Activated CD4-positive, alpha-beta memory T cell treated with anti-CD3 and anti-CD28 coated beads, Interleukin-2, amount 10 ng/mL, durations not matched to agents 7 days and 5 days (primary cell): ENCODE measurements at regions of chr13 and their contacts with region 1.

Region 1: GRCh38 chr13:36858290-36858689 is 39.3 kb downstream of the RFXAP start:
- DNase-seq: no peak
- H3K4me3 Mint-ChIP-seq: no peak overlapping the region
- H3K27ac Mint-ChIP-seq: no peak overlapping the region
- H3K4me1 Mint-ChIP-seq: peaks cover 13% of the 10 kb centered on the region
- H3K27me3 Mint-ChIP-seq: peaks cover 18% of the 10 kb centered on the region

Region 2: GRCh38 chr13:36766314-36766713 is 92.0 kb before region 1 on chr13:
- CTCF ChIA-PET with region 1: no interaction called
- POLR2A ChIA-PET with region 1: no interaction called
- DNase-seq: no peak
- H3K4me3 Mint-ChIP-seq: no peak overlapping the region
- H3K27ac Mint-ChIP-seq: no peak overlapping the region
- H3K4me1 Mint-ChIP-seq: no peaks in the 10 kb centered on the region
- H3K27me3 Mint-ChIP-seq: peaks cover 8% of the 10 kb centered on the region

Region 3: GRCh38 chr13:36880961-36881360 is 22.7 kb after region 1 on chr13:
- CTCF ChIA-PET with region 1: no interaction called
- POLR2A ChIA-PET with region 1: no interaction called
- DNase-seq: no peak
- H3K4me3 Mint-ChIP-seq: no peak overlapping the region
- H3K27ac Mint-ChIP-seq: no peak overlapping the region
- H3K4me1 Mint-ChIP-seq: no peaks in the 10 kb centered on the region
- H3K27me3 Mint-ChIP-seq: peaks cover 8% of the 10 kb centered on the region

Region 4: GRCh38 chr13:36981156-36981743 is 123.0 kb after region 1 on chr13:
- CTCF ChIA-PET with region 1: interaction called, 23 read pairs
- POLR2A ChIA-PET with region 1: no interaction called
- DNase-seq: no peak
- H3K4me3 Mint-ChIP-seq: no peak overlapping the region
- H3K27ac Mint-ChIP-seq: no peak overlapping the region
- H3K4me1 Mint-ChIP-seq: peaks cover 3% of the 10 kb centered on the region
- H3K27me3 Mint-ChIP-seq: no peaks in the 10 kb centered on the region